ENCODE measurements at regions of chr11 and their contacts with region 1.

Region 1: GRCh38 chr11:12087075-12088004 is 23.1 kb upstream of the MICAL2 start:
- DNase-seq: no peak
- ATAC-seq: no peak

Region 2: DNA sequence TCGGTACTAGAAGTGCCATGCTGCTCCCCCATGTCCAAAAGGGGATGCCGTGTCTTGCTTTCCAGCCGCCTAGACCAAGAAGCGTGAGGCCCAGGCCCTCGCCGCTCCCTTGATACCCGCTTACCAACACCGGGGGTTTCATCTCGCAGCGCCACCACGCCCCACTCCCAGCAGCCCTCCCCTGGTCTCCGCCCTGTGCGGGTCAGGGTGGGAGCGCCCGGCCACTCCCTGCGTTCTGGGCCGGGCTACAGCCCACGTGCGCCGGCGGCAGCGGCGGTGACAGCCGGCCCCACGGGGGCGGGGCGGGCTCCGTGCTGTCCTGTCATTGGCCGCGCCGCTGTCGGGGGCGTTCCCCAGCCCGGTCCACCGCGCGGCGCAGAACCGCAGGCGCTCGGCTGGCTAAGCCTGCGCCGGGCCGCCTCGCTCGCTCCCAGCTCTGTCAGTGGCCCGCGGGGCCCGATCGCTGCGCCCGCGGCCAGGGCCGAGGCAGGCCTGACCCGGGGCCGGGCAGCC is 22.9 kb after region 1 on chr11 and contains the start of gene MICAL2:
- intact Hi-C with region 1: loop called (anchors 2 kb)
- DNase-seq: peak; percentile 95
- ATAC-seq: peak; percentile 98
- total RNA-seq, gene MICAL2: 42.0 TPM

Region 3: DNA sequence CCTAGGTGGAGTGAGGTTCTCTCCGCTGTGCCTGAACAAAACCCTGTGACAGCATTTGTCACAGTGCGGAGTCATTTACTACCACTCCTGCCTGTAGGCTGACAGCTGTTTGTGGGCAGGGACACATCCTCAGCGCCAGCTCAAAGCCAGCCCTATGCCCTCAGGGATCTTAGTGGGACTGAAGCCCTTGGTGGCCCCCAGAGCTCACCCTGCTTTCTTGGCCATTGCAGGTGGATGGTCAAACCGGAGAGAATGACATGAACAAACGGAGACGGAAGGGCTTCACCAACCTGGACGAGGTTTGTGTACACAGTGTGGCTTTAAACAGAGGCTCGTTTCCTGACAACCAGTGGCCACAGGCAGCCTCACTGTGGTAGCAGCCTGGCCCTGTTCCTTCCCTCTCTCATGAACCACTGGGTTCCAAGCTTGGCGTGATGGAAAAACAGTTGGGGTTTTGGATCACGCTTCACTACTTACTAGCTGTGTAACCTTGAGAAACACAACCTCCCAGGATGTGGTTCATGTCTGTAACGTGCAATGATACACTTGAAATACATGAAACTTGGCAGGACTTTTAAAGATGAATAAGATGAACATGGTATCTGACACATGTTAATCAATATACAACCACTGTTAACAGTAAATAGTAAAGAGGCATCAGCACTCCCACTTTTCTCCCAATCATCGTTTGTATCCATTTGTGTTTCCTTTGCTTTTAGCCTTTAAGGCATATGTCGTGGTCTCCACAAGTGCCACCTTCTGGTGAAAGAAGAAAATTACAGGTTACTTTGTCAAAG is 148.8 kb after region 1 on chr11:
- intact Hi-C with region 1: loop called (anchors 2 kb)
- DNase-seq: no peak
- ATAC-seq: no peak

Measured in Right ventricle myocardium inferior (tissue), 1 donor.